Activated T-helper 1 cell treated with anti-CD3 and anti-CD28 coated beads, Interleukin-12 subunit alpha, Interleukin-12 subunit beta, Interleukin-2, Interleukin-4 antibody, amounts not matched to agents 30 ng/mL and 10 ng/mL and 1 ng/mL, durations not matched to agents 14 hours and 24 hours and 36 hours (primary cell): ENCODE measurements at regions of chr3 and their contacts with region 1.

Region 1: DNA sequence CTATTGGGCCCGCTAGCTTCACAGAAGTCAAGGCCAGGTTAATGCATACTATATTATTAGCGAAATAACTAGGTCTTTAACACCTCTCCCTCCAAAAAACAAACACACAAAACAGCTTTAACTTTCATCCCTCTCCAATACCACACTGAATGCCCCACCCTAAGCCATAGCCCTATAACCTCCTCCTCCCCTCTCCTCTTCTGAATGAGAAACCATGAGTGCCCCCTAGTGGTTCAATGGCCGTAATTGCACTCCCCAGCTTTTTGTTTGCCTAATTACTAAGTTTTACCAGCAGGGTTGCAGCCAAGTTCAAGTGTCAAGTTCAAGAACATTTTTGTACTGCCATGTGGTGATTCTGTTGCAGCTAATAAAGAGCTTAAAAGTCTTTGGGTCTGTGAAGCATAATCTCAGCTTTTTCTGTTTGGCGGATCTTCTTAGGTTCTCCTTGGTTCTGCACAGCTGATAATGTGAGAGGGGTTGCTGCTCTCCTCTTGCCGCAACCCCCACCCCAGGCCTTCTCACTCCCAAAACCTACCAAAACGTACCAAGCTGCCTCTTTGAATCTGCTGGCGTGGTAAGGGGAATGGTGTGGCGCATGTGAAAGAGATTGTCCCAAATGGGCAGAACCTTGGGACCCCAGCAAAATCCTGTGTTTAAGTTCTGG is 57.9 kb downstream of the RPL22L1 start:
- DNase-seq: peak; percentile 49
- H3K4me3 Mint-ChIP-seq: no peak overlapping the region
- H3K27ac Mint-ChIP-seq: no peak overlapping the region
- H3K4me1 Mint-ChIP-seq: peaks cover 6% of the 10 kb centered on the region
- H3K27me3 Mint-ChIP-seq: peaks cover 10% of the 10 kb centered on the region

Region 2: GRCh38 chr3:169863458-169863899 is 948.6 kb before region 1 on chr3:
- intact Hi-C with region 1: loop called (anchors 1 kb)
- DNase-seq: peak; percentile 44
- H3K4me3 Mint-ChIP-seq: no peak overlapping the region
- H3K27ac Mint-ChIP-seq: no peak overlapping the region
- H3K4me1 Mint-ChIP-seq: peaks cover 24% of the 10 kb centered on the region
- H3K27me3 Mint-ChIP-seq: peaks cover 25% of the 10 kb centered on the region

Region 3: GRCh38 chr3:170189398-170190256 is 622.4 kb before region 1 on chr3:
- intact Hi-C with region 1: loop called (anchors 1 kb)
- DNase-seq: no peak
- H3K4me3 Mint-ChIP-seq: no peak overlapping the region
- H3K27ac Mint-ChIP-seq: no peak overlapping the region
- H3K4me1 Mint-ChIP-seq: peaks cover 15% of the 10 kb centered on the region
- H3K27me3 Mint-ChIP-seq: peaks cover 15% of the 10 kb centered on the region

Region 4: DNA sequence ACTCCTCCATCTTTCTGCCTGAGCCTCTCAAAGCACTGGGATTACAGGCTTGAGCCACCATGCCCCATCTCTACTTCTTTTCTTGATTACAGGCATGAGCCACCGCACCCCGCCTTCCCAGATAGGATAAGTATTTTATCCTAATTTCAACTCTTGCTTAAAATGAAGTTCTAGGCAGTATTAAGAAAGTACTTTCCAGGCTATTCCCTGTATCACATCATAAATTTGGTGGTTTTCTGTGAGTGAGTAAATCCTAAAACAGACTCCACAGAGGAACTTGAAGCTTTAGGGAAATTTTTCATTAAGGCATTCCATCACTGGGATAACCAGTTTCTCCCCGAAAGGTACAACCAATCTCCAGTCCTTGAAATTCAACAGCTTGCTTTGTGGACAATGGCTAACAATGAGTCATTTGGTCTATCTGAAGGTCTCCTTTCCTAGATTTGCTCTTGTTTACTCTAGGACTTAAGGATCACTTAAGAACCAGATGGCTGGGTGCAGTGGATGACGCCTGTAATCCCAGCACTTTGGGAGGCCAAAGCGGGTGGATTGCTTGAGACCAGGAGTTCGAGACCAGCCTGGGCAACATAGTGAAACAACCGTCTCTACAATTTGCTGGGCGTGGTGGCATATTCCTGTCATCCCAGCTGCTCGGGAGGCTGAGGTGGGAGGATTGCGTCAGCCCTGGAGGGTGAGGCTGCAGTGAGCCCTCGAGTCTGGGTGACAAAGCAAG is 504.2 kb before region 1 on chr3:
- intact Hi-C with region 1: loop called (anchors 1 kb)
- DNase-seq: no peak
- H3K4me3 Mint-ChIP-seq: no peak overlapping the region
- H3K27ac Mint-ChIP-seq: no peak overlapping the region
- H3K4me1 Mint-ChIP-seq: no peaks in the 10 kb centered on the region
- H3K27me3 Mint-ChIP-seq: no peaks in the 10 kb centered on the region

Region 5: GRCh38 chr3:170506556-170506955 is 305.5 kb before region 1 on chr3:
- intact Hi-C with region 1: loop called (anchors 5 kb)
- DNase-seq: no peak
- H3K4me3 Mint-ChIP-seq: no peak overlapping the region
- H3K27ac Mint-ChIP-seq: no peak overlapping the region
- H3K4me1 Mint-ChIP-seq: no peaks in the 10 kb centered on the region
- H3K27me3 Mint-ChIP-seq: peaks cover 18% of the 10 kb centered on the region